ENCODE measurements at regions of chr9 and their contacts with region 1.

Region 1: GRCh38 chr9:77456829-77457437 is 191.2 kb downstream of the GNA14 start:
- DNase-seq: peak; percentile 93
- H3K4me3 Mint-ChIP-seq: no peak overlapping the region
- H3K27ac Mint-ChIP-seq: no peak overlapping the region
- H3K4me1 Mint-ChIP-seq: peaks cover 24% of the 10 kb centered on the region
- H3K27me3 Mint-ChIP-seq: no peaks in the 10 kb centered on the region

Region 2: DNA sequence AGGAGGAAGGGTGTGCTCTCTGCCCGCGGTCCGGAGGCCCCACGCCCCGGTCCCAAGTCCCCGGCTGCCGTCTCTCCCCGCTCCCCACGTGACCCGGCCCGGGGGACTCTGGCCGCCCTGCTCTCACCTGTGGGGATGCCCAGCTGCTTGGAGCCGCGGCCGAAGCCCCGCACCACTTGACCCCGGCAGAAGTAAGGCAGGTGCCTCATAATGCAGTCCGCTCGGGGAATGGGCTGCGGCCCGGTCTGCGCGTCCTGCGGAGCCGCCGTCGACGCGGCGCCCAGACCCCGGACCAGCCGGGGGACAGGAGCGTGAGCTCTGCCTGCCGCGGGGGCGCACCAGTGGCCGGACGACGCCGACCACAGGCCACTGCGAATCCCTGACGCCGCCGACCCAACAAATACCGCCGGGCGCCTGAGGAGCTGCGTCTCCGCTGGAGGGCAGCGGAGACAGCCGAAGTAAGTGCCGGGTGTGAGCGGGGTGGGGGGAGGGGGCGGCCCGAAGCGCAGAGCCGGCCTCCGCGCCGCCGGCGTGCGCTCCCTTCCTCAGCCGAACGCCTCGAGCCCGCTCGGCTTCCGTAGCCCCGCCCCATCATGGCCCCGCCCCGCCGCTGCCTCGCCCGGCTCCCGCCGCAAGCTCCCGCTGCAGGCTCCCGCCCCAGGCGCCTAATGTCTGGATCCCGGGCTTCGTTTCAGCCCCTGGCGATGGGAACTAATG is 1062.8 kb before region 1 on chr9 and contains the start of gene RFK:
- CTCF ChIA-PET with region 1: no interaction called
- intact Hi-C with region 1: loop called (anchors 10 kb)
- DNase-seq: peak; percentile 94
- H3K4me3 Mint-ChIP-seq: peak within 1 kb of the TSS; percentile 96
- H3K27ac Mint-ChIP-seq: peak within 1 kb of the TSS; percentile 92
- H3K4me1 Mint-ChIP-seq: peaks cover 25% of the 10 kb centered on the region
- H3K27me3 Mint-ChIP-seq: no peaks in the 10 kb centered on the region
- total RNA-seq, gene RFK: 4.2 to 5.2 TPM

Region 3: GRCh38 chr9:76887003-76887821 is 569.7 kb before region 1 on chr9:
- CTCF ChIA-PET with region 1: no interaction called
- intact Hi-C with region 1: no loop called
- DNase-seq: no peak
- H3K4me3 Mint-ChIP-seq: no peak overlapping the region
- H3K27ac Mint-ChIP-seq: no peak overlapping the region
- H3K4me1 Mint-ChIP-seq: no peaks in the 10 kb centered on the region
- H3K27me3 Mint-ChIP-seq: no peaks in the 10 kb centered on the region

Region 4: DNA sequence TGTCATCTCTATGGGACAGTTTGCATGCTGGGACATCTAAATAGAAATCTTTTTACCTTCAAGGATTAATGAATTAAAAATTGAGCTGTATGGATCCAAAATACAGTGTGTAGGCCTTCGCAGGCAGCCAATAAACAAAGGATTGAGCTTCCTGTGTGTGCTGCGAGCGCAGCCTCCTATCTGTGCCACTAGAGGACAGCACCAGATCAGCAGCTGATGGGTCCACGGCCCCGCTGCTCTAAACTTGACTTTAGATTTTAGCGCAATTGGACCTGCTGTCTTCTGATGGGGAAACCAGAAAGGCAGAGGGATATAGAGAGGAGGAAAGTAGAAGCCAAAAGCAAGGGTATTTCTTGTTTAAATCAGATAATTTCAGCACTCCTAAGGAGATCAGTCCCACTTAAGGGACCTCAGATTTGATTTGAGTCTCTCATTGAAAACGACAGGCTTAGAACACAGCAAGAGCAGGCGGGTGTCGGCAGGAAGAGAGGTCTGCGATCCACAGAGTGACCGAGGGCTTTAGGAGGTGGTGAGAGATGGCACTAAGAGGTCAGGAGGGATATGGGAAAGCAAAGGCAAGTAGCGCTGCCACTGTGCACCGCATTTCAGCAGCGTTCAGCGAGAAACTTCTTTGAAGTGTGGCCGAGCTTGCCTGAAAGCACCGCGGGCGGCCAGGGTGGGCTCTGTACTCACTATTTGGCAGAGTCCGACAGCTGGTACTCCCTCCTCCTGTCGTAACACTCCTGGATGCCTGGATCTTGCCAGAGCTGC is 23.1 kb before region 1 on chr9:
- CTCF ChIA-PET with region 1: interaction called, 42 read pairs
- intact Hi-C with region 1: loop called (anchors 1 kb)
- DNase-seq: peak; percentile 70
- H3K4me3 Mint-ChIP-seq: no peak overlapping the region
- H3K27ac Mint-ChIP-seq: no peak overlapping the region
- H3K4me1 Mint-ChIP-seq: peaks cover 3% of the 10 kb centered on the region
- H3K27me3 Mint-ChIP-seq: no peaks in the 10 kb centered on the region

Region 5: GRCh38 chr9:77469515-77470231 is 12.7 kb after region 1 on chr9:
- CTCF ChIA-PET with region 1: interaction called, 30 read pairs
- intact Hi-C with region 1: no loop called
- DNase-seq: no peak
- H3K4me3 Mint-ChIP-seq: no peak overlapping the region
- H3K27ac Mint-ChIP-seq: no peak overlapping the region
- H3K4me1 Mint-ChIP-seq: no peaks in the 10 kb centered on the region
- H3K27me3 Mint-ChIP-seq: no peaks in the 10 kb centered on the region

Region 6: DNA sequence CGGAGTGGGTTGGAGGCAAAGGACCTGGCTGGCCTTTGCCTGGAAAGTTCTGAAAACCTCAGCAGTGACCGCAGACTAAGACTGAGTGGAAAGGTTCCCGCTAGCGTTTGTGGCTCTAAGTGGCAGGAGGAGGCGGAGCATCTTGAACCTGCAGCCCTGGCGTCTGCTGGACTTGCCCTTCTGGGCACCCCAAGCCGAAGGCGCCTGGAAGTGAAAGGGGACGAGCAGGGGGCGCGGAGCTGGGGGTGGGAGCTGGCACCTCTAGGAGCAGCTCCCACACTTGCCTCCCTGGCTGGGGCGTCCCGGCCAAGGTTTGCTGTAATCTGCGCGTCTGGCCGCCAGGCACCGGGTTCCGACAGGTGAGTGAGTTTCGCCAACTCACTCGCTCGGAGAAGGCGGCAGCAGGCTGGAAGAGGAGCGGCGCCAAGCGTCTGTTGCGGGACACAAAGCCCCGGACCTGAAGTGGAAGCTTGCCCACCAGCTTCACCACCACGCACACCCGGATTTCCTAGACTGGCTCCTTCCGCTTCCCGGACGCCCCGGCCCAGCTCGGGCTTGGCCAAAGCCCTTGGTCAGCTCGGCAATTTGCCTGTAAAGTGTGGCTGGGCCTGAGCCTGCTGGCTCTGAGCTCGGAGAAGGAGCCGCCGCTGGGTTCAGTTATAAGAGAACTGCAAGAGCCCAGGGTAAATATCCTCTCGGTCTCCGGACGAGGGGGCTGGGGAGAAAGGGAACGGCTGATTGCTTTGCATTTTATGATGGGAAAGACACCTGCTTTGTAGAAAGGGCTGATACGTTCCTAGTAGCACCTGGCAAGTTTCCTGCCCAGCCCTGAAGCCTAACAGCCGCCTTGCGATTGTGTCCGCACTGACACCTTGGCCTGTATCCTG is 191.5 kb after region 1 on chr9 and contains the start of gene GNA14:
- CTCF ChIA-PET with region 1: interaction called, 8 read pairs
- intact Hi-C with region 1: loop called (anchors 1 kb)
- DNase-seq: peak; percentile 34
- H3K4me3 Mint-ChIP-seq: peak within 1 kb of the TSS; percentile 66
- H3K27ac Mint-ChIP-seq: no peak within 1 kb of the TSS
- H3K4me1 Mint-ChIP-seq: peaks cover 10% of the 10 kb centered on the region
- H3K27me3 Mint-ChIP-seq: peaks cover 43% of the 10 kb centered on the region
- total RNA-seq, gene GNA14: not detected

Region 7: DNA sequence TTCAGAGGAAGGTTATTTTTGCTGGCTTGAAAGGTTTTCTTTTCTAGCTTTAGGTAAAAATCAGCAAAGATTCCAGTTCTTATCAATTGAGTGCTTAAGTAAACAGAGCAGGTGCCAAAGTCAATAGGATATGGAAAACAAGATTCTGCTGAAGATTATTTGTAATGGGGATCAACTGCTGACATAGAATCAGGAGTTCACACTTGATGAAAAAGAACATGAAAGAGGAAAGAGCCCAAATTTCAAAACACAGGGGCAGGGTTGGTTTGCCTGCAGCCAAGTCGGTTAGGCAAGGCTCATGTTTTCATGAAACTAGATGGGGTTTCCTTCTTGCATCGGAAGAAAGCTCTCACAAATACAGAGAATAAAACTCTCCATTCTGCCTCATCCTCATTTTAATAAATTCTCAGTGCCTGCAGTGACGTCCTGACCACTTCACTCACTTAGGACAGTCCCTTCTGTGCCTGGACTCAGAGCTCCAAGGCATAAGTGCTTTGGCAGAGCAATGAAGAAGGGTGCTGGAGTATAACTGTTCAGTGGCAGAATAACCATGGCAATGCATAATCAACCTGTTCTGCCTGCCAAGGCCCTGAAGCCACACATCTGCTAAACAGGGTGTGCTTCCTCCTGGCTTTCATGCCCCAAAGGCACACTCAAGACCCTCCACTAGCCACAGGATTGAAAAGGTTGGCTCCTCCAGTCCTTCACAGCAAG is 395.1 kb after region 1 on chr9:
- CTCF ChIA-PET with region 1: no interaction called
- intact Hi-C with region 1: loop called (anchors 10 kb)
- DNase-seq: no peak
- H3K4me3 Mint-ChIP-seq: no peak overlapping the region
- H3K27ac Mint-ChIP-seq: no peak overlapping the region
- H3K4me1 Mint-ChIP-seq: peaks cover 41% of the 10 kb centered on the region
- H3K27me3 Mint-ChIP-seq: no peaks in the 10 kb centered on the region